AG04449 (cell line): ENCODE measurements at regions of chr3 and their contacts with region 1.

Region 1: GRCh38 chr3:9503283-9503682 is 50.3 kb downstream of the LHFPL4 start:
- DNase-seq: peak; percentile 5
- H3K4me3 ChIP-seq: no peak overlapping the region
- CTCF ChIP-seq: peak; percentile 92

Region 2: GRCh38 chr3:9352917-9353752 is 150.1 kb before region 1 on chr3:
- CTCF ChIA-PET with region 1: interaction called, 50 read pairs
- POLR2A ChIA-PET with region 1: no interaction called
- DNase-seq: no peak
- H3K4me3 ChIP-seq: no peak overlapping the region
- CTCF ChIP-seq: peak; percentile 84

Region 3: DNA sequence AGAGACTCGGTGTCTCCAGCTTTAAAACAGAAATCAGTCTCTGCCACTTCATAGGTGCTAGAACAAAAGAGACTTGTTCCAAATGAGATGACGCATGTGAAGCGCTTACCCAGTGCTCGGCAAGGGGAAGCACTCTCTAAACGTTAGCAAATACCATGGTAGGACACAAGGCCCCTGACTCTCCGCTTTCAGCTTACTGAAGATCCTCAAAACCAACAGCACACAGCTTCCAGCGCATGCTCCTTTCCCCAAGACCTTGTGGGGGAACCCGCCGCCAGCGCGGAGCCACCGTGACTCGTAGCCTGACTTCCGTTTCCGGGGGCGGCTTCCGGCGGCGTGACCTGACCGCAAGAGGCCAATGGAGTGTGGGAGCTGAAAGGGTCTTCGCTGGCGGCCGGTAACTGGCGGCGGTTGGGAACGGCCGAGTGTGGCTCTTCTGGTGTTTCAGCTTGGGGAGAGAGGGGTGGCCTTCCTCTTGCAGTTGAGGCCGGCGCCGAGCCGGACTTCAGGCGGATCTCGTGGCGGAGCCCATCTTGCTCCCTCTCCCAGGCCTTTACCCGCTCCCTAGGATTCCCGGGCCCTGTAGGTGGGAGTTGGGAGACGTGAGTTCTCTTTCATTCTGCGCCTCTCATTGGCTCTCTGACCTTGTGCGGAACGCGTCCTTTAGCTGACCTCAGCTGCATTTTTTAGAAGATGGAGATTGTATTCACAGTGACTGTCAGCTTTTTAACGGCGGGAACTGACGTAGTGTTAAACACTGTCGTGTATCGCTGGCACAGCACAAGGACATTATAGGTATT is 140.4 kb before region 1 on chr3 and contains the start of gene THUMPD3:
- CTCF ChIA-PET with region 1: interaction called, 11 read pairs
- POLR2A ChIA-PET with region 1: no interaction called
- DNase-seq: peak; percentile 53
- H3K4me3 ChIP-seq: peak within 1 kb of the TSS; percentile 76
- CTCF ChIP-seq: no peak

Region 4: GRCh38 chr3:9491506-9491905 is 11.8 kb before region 1 on chr3:
- CTCF ChIA-PET with region 1: interaction called, 59 read pairs
- POLR2A ChIA-PET with region 1: no interaction called
- DNase-seq: no peak
- H3K4me3 ChIP-seq: no peak overlapping the region
- CTCF ChIP-seq: no peak

Region 5: GRCh38 chr3:9514956-9515355 is 11.7 kb after region 1 on chr3:
- CTCF ChIA-PET with region 1: interaction called, 22 read pairs
- POLR2A ChIA-PET with region 1: no interaction called
- DNase-seq: no peak
- H3K4me3 ChIP-seq: no peak overlapping the region
- CTCF ChIP-seq: no peak